Activated B cell treated with CpG ODN at 0.5 μM for 24 hours (primary cell): ENCODE measurements at regions of chr3 and their contacts with region 1.

Region 1: GRCh38 chr3:63774771-63775170 is 44.3 kb upstream of the C3orf49 start:
- DNase-seq: no peak
- ATAC-seq: no peak
- H3K4me3 Mint-ChIP-seq: no peak overlapping the region
- H3K27ac Mint-ChIP-seq: no peak overlapping the region
- H3K4me1 Mint-ChIP-seq: no peaks in the 10 kb centered on the region
- H3K27me3 Mint-ChIP-seq: no peaks in the 10 kb centered on the region
- CTCF ChIP-seq: no peak

Region 2: DNA sequence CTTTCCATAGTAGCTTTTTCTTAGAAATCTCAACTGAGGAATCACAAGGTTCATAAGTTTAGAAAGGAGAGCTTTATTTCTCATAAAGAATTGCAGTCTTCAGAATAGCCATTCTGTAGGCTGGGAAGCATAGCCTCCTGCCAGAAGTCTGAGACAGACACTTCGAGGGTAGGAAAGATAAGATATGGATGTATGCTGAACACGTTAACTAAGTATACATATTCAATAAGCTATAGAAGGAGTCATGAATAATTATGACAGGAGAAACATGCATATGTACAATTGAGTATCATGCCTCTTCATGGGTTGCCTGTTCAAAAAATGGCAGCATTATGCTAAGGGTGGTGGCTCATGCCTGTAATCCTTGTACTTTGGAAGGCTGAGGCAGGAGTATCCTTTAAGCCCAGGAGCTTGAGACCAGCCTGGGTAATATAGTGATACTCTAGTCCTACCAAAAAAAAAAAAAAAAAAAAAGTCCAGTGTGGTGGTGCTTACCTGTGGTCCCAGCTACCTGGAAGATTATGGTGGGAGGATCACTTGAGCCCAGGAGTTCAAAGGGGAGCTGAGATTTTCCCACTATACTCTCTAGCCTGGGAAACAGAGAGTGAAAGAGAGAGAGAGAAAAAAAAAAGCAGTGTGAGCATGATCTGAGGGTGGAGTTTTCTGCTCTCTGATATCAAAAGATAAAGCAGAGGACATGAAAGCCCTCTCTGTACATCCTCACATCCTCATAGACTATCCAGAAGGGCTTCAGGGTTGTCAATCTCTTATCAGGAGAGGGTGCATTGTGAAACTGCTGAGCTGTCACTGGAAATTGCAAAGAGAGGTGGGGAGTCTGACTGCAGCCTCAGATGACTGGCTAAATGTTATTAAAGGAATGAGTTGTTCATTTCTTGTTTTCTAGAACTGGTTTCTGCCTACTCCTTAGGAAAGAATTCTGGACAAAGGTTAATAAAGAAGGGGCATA is 876.0 kb before region 1 on chr3:
- CTCF ChIA-PET with region 1: no interaction called
- POLR2A ChIA-PET with region 1: no interaction called
- intact Hi-C with region 1: no loop called
- DNase-seq: no peak
- ATAC-seq: no peak
- H3K4me3 Mint-ChIP-seq: no peak overlapping the region
- H3K27ac Mint-ChIP-seq: no peak overlapping the region
- H3K4me1 Mint-ChIP-seq: no peaks in the 10 kb centered on the region
- H3K27me3 Mint-ChIP-seq: no peaks in the 10 kb centered on the region
- CTCF ChIP-seq: no peak

Region 3: DNA sequence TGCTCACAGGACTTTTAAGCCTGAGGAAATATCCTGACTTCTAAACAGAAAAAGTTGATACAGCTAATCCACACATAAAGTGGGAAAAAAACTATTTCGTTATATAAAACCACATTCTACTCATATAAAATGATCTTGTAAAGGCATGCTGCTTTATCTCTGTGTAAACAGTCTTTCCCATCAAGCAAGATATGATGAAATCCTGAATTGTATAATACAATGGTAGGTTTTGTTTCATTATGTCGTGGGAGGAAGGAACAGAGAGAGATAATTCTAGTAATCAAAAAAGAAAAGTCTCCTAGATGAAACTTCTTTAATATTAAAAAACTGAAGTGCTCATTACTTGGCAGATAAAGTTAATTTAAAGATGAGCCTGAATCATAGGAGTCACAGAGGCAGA is 214.9 kb before region 1 on chr3:
- CTCF ChIA-PET with region 1: no interaction called
- POLR2A ChIA-PET with region 1: no interaction called
- intact Hi-C with region 1: loop called (anchors 5 kb)
- DNase-seq: no peak
- ATAC-seq: no peak
- H3K4me3 Mint-ChIP-seq: no peak overlapping the region
- H3K27ac Mint-ChIP-seq: no peak overlapping the region
- H3K4me1 Mint-ChIP-seq: no peaks in the 10 kb centered on the region
- H3K27me3 Mint-ChIP-seq: no peaks in the 10 kb centered on the region
- CTCF ChIP-seq: no peak

Region 4: DNA sequence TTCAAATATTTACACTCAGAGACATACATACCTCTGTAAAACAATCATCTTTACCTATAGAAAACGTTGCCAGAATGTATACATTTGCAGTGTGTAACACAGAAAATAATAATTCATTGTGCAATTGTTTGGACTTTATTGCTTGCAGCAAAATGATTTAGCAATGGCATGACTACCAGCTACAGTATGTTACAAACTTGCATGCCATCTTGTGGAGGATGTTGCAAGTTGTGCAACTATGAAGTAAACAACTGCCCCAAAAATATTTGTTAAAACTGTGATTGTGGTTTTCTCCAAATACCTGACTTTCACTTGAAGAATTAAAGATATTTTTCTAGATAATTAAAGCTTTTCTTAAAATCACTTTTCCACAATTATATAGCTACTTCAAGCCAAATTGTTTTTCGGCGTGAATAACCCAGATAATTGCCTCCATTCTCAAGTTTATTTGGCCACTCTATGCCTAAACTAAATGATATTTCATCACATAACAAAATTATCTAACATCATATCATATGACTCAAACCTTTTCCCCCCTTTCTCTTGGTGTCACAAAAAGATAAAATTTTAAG is 17.3 kb after region 1 on chr3:
- CTCF ChIA-PET with region 1: no interaction called
- POLR2A ChIA-PET with region 1: no interaction called
- intact Hi-C with region 1: no loop called
- DNase-seq: no peak
- ATAC-seq: no peak
- H3K4me3 Mint-ChIP-seq: no peak overlapping the region
- H3K27ac Mint-ChIP-seq: no peak overlapping the region
- H3K4me1 Mint-ChIP-seq: no peaks in the 10 kb centered on the region
- H3K27me3 Mint-ChIP-seq: peaks cover 3% of the 10 kb centered on the region
- CTCF ChIP-seq: no peak